ENCODE measurements at regions of chr13 and their contacts with region 1.

Region 1: GRCh38 chr13:33723772-33724435 is 94.0 kb upstream of the RFC3 start:
- DNase-seq: peak; percentile 54 to 94 (median 61)
- ATAC-seq: peak; percentile 98
- H3K4me3 ChIP-seq: no peak overlapping the region
- H3K4me1 ChIP-seq: no peaks in the 10 kb centered on the region
- CTCF ChIP-seq: peak; percentile 41

Region 2: GRCh38 chr13:33218001-33218400 is 505.9 kb before region 1 on chr13:
- intact Hi-C with region 1: loop called in 1 of 2 experiments (anchors 10 kb)
- DNase-seq: peak in 1 of 3 donors; percentile 42
- ATAC-seq: peak; percentile 96
- H3K4me3 ChIP-seq: no peak overlapping the region
- H3K4me1 ChIP-seq: peaks cover 20% of the 10 kb centered on the region
- CTCF ChIP-seq: no peak

Region 3: DNA sequence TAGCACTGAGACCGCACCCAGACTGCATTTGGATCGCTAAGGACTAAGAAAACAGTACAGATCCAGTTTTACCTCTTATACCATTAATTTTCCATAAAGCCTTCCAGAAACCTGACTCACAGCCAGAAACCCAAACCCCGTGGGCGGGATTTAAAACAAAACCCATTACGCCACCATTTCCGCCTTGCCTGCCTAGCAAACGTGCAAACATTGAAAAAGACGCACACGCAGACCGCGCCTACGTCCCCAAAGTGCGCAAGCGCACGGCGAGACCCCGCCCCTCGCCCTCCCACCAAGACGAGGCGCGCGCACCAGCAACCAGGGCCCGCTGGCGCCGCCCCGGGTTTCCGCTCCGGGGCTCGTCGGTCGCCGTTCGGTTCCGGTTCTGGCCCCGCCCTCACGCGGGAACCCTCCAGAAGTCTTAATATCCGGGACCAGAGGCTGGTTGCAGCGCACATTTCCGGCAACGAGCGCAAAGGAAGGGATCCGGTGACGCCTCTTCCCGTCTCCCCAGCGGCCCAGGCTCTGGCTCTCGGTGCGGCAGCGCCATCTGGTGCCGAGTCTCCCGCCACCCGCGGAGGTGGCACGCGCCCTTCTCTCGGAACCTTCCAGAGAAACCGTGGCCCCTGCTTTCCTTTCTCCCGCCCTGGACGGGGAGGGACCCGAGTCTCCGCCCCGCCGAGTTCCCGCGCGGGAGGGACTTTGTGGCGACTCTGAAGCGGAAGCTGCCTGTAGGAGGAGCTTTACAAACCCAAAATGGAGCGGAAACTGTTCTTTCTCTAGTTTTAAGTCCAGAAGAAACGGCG is 181.4 kb before region 1 on chr13:
- intact Hi-C with region 1: loop called in 1 of 2 experiments (anchors 5 kb)
- DNase-seq: peak; percentile 98 to 99 (median 99)
- ATAC-seq: peak; percentile 94
- H3K4me3 ChIP-seq: peak overlapping the region; percentile 18
- H3K4me1 ChIP-seq: peaks cover 25% of the 10 kb centered on the region
- CTCF ChIP-seq: peak; percentile 21

Region 4: GRCh38 chr13:33554919-33555791 is 168.7 kb before region 1 on chr13:
- intact Hi-C with region 1: loop called in 1 of 2 experiments (anchors 10 kb)
- DNase-seq: no peak
- ATAC-seq: no peak
- H3K4me3 ChIP-seq: no peak overlapping the region
- H3K4me1 ChIP-seq: no peaks in the 10 kb centered on the region
- CTCF ChIP-seq: no peak

Measured in mucosa of descending colon (tissue), 3 donors.